K562 (cell line): ENCODE measurements at regions of chr20 and their contacts with region 1.

Region 1: GRCh38 chr20:36439040-36439730 is 102.1 kb upstream of the MYL9 start:
- DNase-seq: peak; percentile 64 to 82 (median 71)
- ATAC-seq: peak; percentile 57
- H3K4me3 ChIP-seq: no peak overlapping the region
- H3K27ac ChIP-seq: no peak overlapping the region
- H3K4me1 ChIP-seq: peaks cover 5 to 18% of the 10 kb centered on the region in 2 experiments; a peak in 3 of 5 replicates
- H3K27me3 ChIP-seq: peaks cover 0 to 46% of the 10 kb centered on the region in 2 experiments; a peak in 2 of 5 replicates
- CTCF ChIP-seq: peak; percentile 89 to 95 (median 94)
- EP300 ChIP-seq: no peak
- POLR2A ChIP-seq: no peak
- RAD21 ChIP-seq: peak; percentile 63 to 90

Region 2: GRCh38 chr20:35994994-35995453 is 444.2 kb before region 1 on chr20:
- CTCF ChIA-PET with region 1: no interaction called
- POLR2A ChIA-PET with region 1: no interaction called
- in situ Hi-C with region 1: loop called (anchors 25 kb)
- intact Hi-C with region 1: loop called (anchors 5 kb)
- DNase-seq: peak; percentile 67 to 90 (median 73)
- ATAC-seq: peak; percentile 97
- H3K4me3 ChIP-seq: no peak overlapping the region
- H3K27ac ChIP-seq: no peak overlapping the region
- H3K4me1 ChIP-seq: peaks cover 0 to 11% of the 10 kb centered on the region in 2 experiments; a peak in 4 of 5 replicates
- H3K27me3 ChIP-seq: no peaks in the 10 kb centered on the region; a peak in 1 of 5 replicates
- CTCF ChIP-seq: peak; percentile 91 to 96 (median 93)
- EP300 ChIP-seq: 0 out of 2 replicates have a peak, but pooled peaks have one; percentile 21
- POLR2A ChIP-seq: no peak
- RAD21 ChIP-seq: peak; percentile 95 to 99

Region 3: DNA sequence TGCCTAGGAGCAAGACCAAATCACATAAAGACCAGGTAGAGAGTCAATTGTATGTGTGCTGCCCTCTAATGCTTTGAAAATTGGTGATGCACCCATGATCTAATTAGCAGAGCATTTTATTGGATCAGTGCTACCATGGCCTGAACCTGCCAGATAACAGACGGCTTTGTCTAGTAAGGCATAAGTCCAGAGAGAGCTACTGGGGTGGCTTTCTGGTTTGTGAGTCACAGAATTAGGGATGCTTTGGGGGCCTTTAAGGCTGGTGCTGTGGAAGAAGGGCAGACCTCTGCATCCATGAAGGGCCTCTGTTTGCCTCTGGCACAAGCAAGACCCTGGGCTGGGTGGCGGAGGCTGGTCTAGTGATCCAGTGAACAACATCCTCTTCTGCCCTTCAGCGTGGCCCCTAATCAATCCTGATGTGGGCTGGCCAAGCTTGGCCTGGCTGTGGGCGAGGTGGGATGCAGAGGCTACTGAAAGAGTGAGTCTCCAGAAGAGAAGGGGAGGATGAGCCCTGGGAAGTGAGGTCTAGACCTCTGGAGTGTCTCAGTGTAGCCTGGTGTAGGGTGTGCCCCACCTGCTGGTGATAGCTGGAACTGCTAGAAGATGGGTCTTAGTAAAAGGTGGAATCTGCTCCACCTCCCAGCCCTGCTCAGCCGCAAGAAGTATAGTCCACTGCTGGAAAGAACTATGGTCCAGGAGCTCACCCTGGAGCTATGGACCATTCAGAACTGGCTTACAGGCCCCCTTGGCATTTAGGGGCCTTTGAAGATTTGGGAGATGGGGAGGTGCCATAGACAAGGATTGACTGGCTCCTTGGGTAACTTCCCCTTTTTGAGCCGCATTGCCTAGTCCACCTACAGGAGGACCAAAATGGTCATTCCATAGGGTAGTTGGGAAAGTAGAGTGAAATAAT is 239.6 kb before region 1 on chr20:
- CTCF ChIA-PET with region 1: interaction called, 4 read pairs
- POLR2A ChIA-PET with region 1: interaction called, 3 read pairs
- in situ Hi-C with region 1: loop called (anchors 25 kb)
- intact Hi-C with region 1: loop called (anchors 2 kb)
- DNase-seq: peak; percentile 82 to 83 (median 83)
- ATAC-seq: peak; percentile 93
- H3K4me3 ChIP-seq: no peak overlapping the region
- H3K27ac ChIP-seq: no peak overlapping the region
- H3K4me1 ChIP-seq: no peaks in the 10 kb centered on the region
- H3K27me3 ChIP-seq: peaks cover 13 to 44% of the 10 kb centered on the region in 2 experiments; a peak in 3 of 5 replicates
- CTCF ChIP-seq: peak; percentile 89 to 95 (median 95)
- EP300 ChIP-seq: no peak
- POLR2A ChIP-seq: no peak
- RAD21 ChIP-seq: peak; percentile 79 to 96

Region 4: GRCh38 chr20:36214684-36215256 is 224.4 kb before region 1 on chr20:
- CTCF ChIA-PET with region 1: interaction called, 7 read pairs
- POLR2A ChIA-PET with region 1: no interaction called
- in situ Hi-C with region 1: loop called (anchors 25 kb)
- intact Hi-C with region 1: loop called (anchors 1 kb)
- DNase-seq: peak; percentile 51 to 59 (median 56)
- ATAC-seq: peak; percentile 83
- H3K4me3 ChIP-seq: no peak overlapping the region
- H3K27ac ChIP-seq: no peak overlapping the region
- H3K4me1 ChIP-seq: no peaks in the 10 kb centered on the region
- H3K27me3 ChIP-seq: peaks cover 27 to 63% of the 10 kb centered on the region in 2 experiments
- CTCF ChIP-seq: peak; percentile 75 to 85 (median 81)
- EP300 ChIP-seq: no peak
- POLR2A ChIP-seq: no peak
- RAD21 ChIP-seq: peak; percentile 58 to 81

Region 5: DNA sequence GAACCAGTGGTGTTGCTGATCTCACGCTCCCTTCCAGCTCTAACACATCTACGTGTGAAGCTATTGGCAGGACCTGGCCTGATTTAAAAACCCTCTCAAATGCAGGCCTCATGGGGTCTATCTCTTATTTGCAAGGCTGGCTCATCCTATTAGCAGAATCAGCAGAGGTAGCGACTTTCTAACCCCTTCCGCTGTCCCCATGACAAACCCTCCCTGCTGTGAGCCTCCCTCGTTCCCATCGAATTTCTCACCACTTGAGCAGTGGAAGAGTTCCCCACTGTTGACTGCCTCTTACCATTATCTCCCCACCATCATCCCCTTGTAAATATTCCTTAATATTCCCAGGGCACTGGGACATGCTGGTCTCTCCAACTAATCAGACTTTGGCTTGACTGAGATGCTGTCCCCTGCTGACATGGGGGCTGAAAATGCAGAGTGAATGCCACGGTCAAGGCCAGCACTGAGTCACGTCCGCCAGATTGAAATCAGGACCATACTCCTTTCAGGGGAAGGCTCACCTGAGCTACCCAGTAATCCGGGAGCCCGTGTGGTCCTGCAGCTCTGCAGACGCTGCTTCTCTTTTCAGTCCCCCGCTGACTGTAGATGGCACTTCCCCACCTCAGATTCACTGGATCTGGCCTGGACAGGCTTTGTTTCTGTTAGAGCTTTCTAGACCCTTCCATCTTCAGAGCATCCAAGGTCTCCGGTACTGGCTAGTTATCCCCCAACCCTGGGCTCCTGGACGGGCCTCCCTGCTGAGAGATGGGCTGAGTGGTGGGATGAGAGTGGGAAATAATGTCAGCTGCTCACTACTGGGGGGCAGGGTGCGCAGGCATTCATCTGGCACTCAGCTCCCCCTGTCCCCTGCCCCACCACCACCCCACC is 179.8 kb before region 1 on chr20:
- CTCF ChIA-PET with region 1: no interaction called
- POLR2A ChIA-PET with region 1: no interaction called
- in situ Hi-C with region 1: no loop called
- intact Hi-C with region 1: no loop called
- DNase-seq: no peak
- ATAC-seq: no peak
- H3K4me3 ChIP-seq: no peak overlapping the region
- H3K27ac ChIP-seq: no peak overlapping the region
- H3K4me1 ChIP-seq: no peaks in the 10 kb centered on the region; a peak in 1 of 5 replicates
- H3K27me3 ChIP-seq: peaks cover 9 to 32% of the 10 kb centered on the region in 2 experiments; a peak in 3 of 5 replicates
- CTCF ChIP-seq: no peak
- EP300 ChIP-seq: no peak
- POLR2A ChIP-seq: no peak
- RAD21 ChIP-seq: no peak

Region 6: GRCh38 chr20:36493013-36493800 is 54.0 kb after region 1 on chr20:
- CTCF ChIA-PET with region 1: interaction called, 4 read pairs
- POLR2A ChIA-PET with region 1: no interaction called
- in situ Hi-C with region 1: no loop called
- intact Hi-C with region 1: loop called (anchors 2 kb)
- DNase-seq: peak in 3 of 4 experiments; percentile 27 to 52 (median 46)
- ATAC-seq: peak; percentile 81
- H3K4me3 ChIP-seq: no peak overlapping the region
- H3K27ac ChIP-seq: no peak overlapping the region
- H3K4me1 ChIP-seq: peaks cover 3 to 19% of the 10 kb centered on the region in 2 experiments; a peak in 3 of 5 replicates
- H3K27me3 ChIP-seq: no peaks in the 10 kb centered on the region
- CTCF ChIP-seq: peak; percentile 51 to 75 (median 69)
- EP300 ChIP-seq: no peak
- POLR2A ChIP-seq: no peak
- RAD21 ChIP-seq: peak; percentile 48 to 69

Region 7: GRCh38 chr20:36541227-36541763 is 102.1 kb after region 1 on chr20 and contains the start of gene MYL9:
- CTCF ChIA-PET with region 1: no interaction called
- POLR2A ChIA-PET with region 1: no interaction called
- in situ Hi-C with region 1: no loop called
- intact Hi-C with region 1: loop called (anchors 10 kb)
- DNase-seq: peak; percentile 77 to 94 (median 88)
- ATAC-seq: peak; percentile 93
- H3K4me3 ChIP-seq: peak within 1 kb of the TSS; percentile 41
- H3K27ac ChIP-seq: peak within 1 kb of the TSS; percentile 66; the same call in 1 of the 3 replicates
- H3K4me1 ChIP-seq: peaks cover 0 to 40% of the 10 kb centered on the region in 2 experiments; a peak in 3 of 5 replicates
- H3K27me3 ChIP-seq: no peaks in the 10 kb centered on the region
- CTCF ChIP-seq: no peak
- EP300 ChIP-seq: no peak
- POLR2A ChIP-seq: no peak
- RAD21 ChIP-seq: no peak
- polyA plus RNA-seq, gene MYL9: 0.11 TPM in 1 of 2 experiments, not detected in the other

Region 8: GRCh38 chr20:36684747-36685146 is 245.6 kb after region 1 on chr20:
- CTCF ChIA-PET with region 1: no interaction called
- POLR2A ChIA-PET with region 1: no interaction called
- in situ Hi-C with region 1: no loop called
- intact Hi-C with region 1: no loop called
- DNase-seq: no peak
- ATAC-seq: no peak
- H3K4me3 ChIP-seq: no peak overlapping the region
- H3K27ac ChIP-seq: no peak overlapping the region
- H3K4me1 ChIP-seq: no peaks in the 10 kb centered on the region; a peak in 1 of 5 replicates
- H3K27me3 ChIP-seq: no peaks in the 10 kb centered on the region
- CTCF ChIP-seq: no peak
- EP300 ChIP-seq: no peak
- POLR2A ChIP-seq: no peak
- RAD21 ChIP-seq: no peak